OCI-LY7 (cell line): ENCODE measurements at regions of chr3 and their contacts with region 1.

Region 1: GRCh38 chr3:72082186-72082715 is 297.3 kb upstream of the PROK2 start:
- DNase-seq: peak; percentile 80
- H3K4me3 ChIP-seq: peak overlapping the region; percentile 12
- H3K27ac ChIP-seq: peak overlapping the region; percentile 65
- H3K4me1 ChIP-seq: peaks cover 100% of the 10 kb centered on the region
- CTCF ChIP-seq: no peak

Region 2: DNA sequence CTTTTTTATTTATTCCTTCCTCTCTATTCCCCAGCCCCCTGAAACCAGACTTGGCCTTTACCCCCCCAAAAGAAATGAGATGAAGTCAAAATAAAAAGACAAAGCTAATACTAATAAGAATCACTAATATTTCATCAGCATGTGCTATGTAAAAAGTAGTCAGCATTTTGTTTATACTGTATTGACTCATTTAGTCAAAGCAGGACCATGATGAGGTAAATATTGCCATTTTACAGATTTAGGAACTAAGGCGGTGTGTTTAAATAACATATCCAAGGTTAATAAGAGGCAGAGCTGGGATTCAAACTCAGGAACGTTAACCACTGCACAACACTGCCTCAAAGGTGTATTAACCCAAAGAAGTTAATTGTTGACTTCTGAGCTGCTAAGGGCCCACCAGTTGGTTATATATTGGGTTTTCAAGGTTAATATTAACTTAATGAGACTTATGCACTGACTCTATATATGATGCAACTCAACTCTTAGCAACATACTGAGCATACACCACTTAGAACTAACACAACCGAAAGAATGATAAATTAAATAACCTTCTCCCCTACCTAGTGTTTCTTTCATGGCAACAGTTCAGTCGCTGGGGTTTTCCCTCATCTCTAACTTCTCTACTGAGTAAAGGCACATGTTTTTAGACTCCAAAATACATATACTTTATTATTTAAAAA is 533.4 kb before region 1 on chr3:
- CTCF ChIA-PET with region 1: no interaction called
- POLR2A ChIA-PET with region 1: no interaction called
- intact Hi-C with region 1: no loop called
- DNase-seq: no peak
- H3K4me3 ChIP-seq: no peak overlapping the region
- H3K27ac ChIP-seq: no peak overlapping the region
- H3K4me1 ChIP-seq: peaks cover 78% of the 10 kb centered on the region
- CTCF ChIP-seq: no peak

Region 3: GRCh38 chr3:71657831-71658530 is 424.3 kb before region 1 on chr3:
- CTCF ChIA-PET with region 1: no interaction called
- POLR2A ChIA-PET with region 1: no interaction called
- intact Hi-C with region 1: no loop called
- DNase-seq: no peak
- H3K4me3 ChIP-seq: no peak overlapping the region
- H3K27ac ChIP-seq: no peak overlapping the region
- H3K4me1 ChIP-seq: peaks cover 68% of the 10 kb centered on the region
- CTCF ChIP-seq: no peak

Region 4: DNA sequence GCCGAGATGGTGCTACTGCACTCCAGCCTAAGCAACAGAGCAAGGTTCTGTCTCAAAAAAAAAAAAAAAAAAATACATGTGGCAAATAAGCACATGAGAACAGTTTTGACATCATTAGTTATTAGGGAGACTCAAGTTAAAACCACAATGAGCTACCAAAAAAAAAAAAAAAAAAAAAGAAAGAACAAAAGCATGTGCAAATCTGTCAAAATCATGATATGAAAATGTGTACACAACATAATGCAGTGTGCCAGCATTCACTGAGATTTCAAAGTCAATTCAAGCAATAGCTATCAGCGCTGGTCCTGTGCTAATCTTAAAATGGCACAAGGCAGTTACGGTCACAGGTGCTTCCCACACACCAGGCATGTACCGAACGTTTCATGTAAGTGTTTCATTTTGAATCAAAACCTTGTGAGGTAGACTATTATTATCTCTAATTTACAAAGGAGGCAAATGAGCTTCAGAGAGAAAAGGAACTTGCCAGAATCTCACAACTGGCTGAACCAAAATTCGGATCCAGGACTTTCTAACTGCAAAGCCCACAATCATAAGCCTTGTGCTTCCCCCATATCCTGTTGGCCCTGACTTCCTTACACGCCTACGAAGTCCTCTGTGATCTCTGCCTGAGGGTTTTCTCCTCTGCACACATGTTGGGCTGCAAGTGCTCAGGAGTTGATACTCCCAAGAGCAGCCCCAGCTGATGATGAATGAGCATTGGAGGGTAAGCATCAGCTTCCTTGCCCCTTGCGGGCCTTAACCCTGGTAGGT is 97.2 kb before region 1 on chr3:
- CTCF ChIA-PET with region 1: interaction called, 3 read pairs
- POLR2A ChIA-PET with region 1: interaction called, 17 read pairs
- intact Hi-C with region 1: loop called (anchors 1 kb)
- DNase-seq: peak; percentile 87
- H3K4me3 ChIP-seq: peak overlapping the region; percentile 15
- H3K27ac ChIP-seq: peak overlapping the region; percentile 94
- H3K4me1 ChIP-seq: peaks cover 54% of the 10 kb centered on the region
- CTCF ChIP-seq: no peak

Region 5: GRCh38 chr3:72100601-72101187 is 18.4 kb after region 1 on chr3:
- CTCF ChIA-PET with region 1: interaction called, 8 read pairs
- POLR2A ChIA-PET with region 1: interaction called, 40 read pairs
- intact Hi-C with region 1: loop called (anchors 1 kb)
- DNase-seq: peak; percentile 79
- H3K4me3 ChIP-seq: peak overlapping the region; percentile 62
- H3K27ac ChIP-seq: peak overlapping the region; percentile 43
- H3K4me1 ChIP-seq: peaks cover 75% of the 10 kb centered on the region
- CTCF ChIP-seq: no peak

Region 6: GRCh38 chr3:72265256-72266015 is 183.2 kb after region 1 on chr3:
- CTCF ChIA-PET with region 1: no interaction called
- POLR2A ChIA-PET with region 1: no interaction called
- intact Hi-C with region 1: loop called (anchors 2 kb)
- DNase-seq: peak; percentile 41
- H3K4me3 ChIP-seq: no peak overlapping the region
- H3K27ac ChIP-seq: no peak overlapping the region
- H3K4me1 ChIP-seq: no peaks in the 10 kb centered on the region
- CTCF ChIP-seq: peak; percentile 76